CD4-positive, alpha-beta memory T cell (primary cell): ENCODE measurements at regions of chr18 and their contacts with region 1.

Region 1: DNA sequence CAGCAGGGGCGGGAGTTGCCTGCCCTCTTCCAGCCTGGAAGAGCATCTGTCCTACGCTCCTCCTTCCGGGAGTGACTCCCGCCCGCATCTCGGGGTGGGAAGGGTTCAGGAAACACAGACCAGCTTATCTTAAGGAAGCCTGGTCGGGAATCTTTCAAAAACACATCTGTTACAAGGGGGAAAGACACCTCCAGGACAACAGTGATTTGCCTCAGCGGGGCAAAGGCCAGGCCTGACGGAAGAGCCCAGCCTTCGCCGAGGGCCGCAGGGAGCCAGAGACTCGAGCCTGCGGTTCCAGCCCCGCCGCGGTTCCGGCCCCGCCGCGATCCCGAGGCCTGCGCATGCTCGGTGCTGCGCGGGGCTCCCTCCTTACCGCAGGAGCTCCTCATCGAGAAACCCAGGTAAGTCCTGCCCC is 38.1 kb upstream of the TGIF1 start:
- DNase-seq: peak in 4 of 5 donors; percentile 16 to 33 (median 20)
- H3K4me3 ChIP-seq: no peak overlapping the region
- H3K4me3 Mint-ChIP-seq: peak overlapping the region; percentile 57 to 79 (median 66)
- H3K27ac ChIP-seq: no peak overlapping the region
- H3K27ac Mint-ChIP-seq: peak overlapping the region in 3 of 7 donors; percentile 29 to 78 (median 37)
- H3K4me1 ChIP-seq: peaks cover 3% of the 10 kb centered on the region
- H3K4me1 Mint-ChIP-seq: peaks cover 2 to 10% (median 6%) of the 10 kb centered on the region in 4 donors
- H3K27me3 ChIP-seq: no peaks in the 10 kb centered on the region
- H3K27me3 Mint-ChIP-seq: no peaks in the 10 kb centered on the region

Region 2: GRCh38 chr18:3422905-3423304 is 11.0 kb after region 1 on chr18:
- CTCF ChIA-PET with region 1: no interaction called
- POLR2A ChIA-PET with region 1: no interaction called
- intact Hi-C with region 1: loop called (anchors 2 kb)
- DNase-seq: no peak
- H3K4me3 ChIP-seq: no peak overlapping the region
- H3K4me3 Mint-ChIP-seq: no peak overlapping the region
- H3K27ac ChIP-seq: no peak overlapping the region
- H3K27ac Mint-ChIP-seq: no peak overlapping the region
- H3K4me1 ChIP-seq: no peaks in the 10 kb centered on the region
- H3K4me1 Mint-ChIP-seq: no peaks in the 10 kb centered on the region
- H3K27me3 ChIP-seq: no peaks in the 10 kb centered on the region
- H3K27me3 Mint-ChIP-seq: no peaks in the 10 kb centered on the region

Region 3: GRCh38 chr18:3675446-3675845 is 263.6 kb after region 1 on chr18:
- CTCF ChIA-PET with region 1: no interaction called
- POLR2A ChIA-PET with region 1: no interaction called
- intact Hi-C with region 1: no loop called
- DNase-seq: no peak
- H3K4me3 ChIP-seq: no peak overlapping the region
- H3K4me3 Mint-ChIP-seq: no peak overlapping the region
- H3K27ac ChIP-seq: no peak overlapping the region
- H3K27ac Mint-ChIP-seq: no peak overlapping the region
- H3K4me1 ChIP-seq: no peaks in the 10 kb centered on the region
- H3K4me1 Mint-ChIP-seq: no peaks in the 10 kb centered on the region
- H3K27me3 ChIP-seq: no peaks in the 10 kb centered on the region
- H3K27me3 Mint-ChIP-seq: peaks cover 8 to 18% of the 10 kb centered on the region in 2 donors